Panc1 (cell line): ENCODE measurements at regions of chr15 and their contacts with region 1.

Region 1: GRCh38 chr15:89358755-89359439 is 24.3 kb upstream of the POLG start:
- DNase-seq: peak; percentile 65
- ATAC-seq: peak; percentile 88
- H3K4me3 ChIP-seq: peak overlapping the region; percentile 44 to 55; a peak in 3 of 4 replicates
- H3K27ac ChIP-seq: no peak overlapping the region
- H3K4me1 ChIP-seq: peaks cover 2% of the 10 kb centered on the region; the same call in 1 of the 2 replicates
- H3K27me3 ChIP-seq: peaks cover 28% of the 10 kb centered on the region
- CTCF ChIP-seq: peak; percentile 99

Region 2: GRCh38 chr15:89087830-89088604 is 270.9 kb before region 1 on chr15 and contains the start of gene ABHD2:
- CTCF ChIA-PET with region 1: no interaction called
- POLR2A ChIA-PET with region 1: interaction called, 17 read pairs
- in situ Hi-C with region 1: no loop called
- intact Hi-C with region 1: no loop called
- DNase-seq: peak; percentile 100
- ATAC-seq: peak; percentile 96
- H3K4me3 ChIP-seq: peak within 1 kb of the TSS; percentile 84
- H3K27ac ChIP-seq: peak within 1 kb of the TSS; percentile 97
- H3K4me1 ChIP-seq: peaks cover 40% of the 10 kb centered on the region
- H3K27me3 ChIP-seq: no peaks in the 10 kb centered on the region
- CTCF ChIP-seq: no peak
- total RNA-seq, gene ABHD2: 95.0 TPM

Region 3: DNA sequence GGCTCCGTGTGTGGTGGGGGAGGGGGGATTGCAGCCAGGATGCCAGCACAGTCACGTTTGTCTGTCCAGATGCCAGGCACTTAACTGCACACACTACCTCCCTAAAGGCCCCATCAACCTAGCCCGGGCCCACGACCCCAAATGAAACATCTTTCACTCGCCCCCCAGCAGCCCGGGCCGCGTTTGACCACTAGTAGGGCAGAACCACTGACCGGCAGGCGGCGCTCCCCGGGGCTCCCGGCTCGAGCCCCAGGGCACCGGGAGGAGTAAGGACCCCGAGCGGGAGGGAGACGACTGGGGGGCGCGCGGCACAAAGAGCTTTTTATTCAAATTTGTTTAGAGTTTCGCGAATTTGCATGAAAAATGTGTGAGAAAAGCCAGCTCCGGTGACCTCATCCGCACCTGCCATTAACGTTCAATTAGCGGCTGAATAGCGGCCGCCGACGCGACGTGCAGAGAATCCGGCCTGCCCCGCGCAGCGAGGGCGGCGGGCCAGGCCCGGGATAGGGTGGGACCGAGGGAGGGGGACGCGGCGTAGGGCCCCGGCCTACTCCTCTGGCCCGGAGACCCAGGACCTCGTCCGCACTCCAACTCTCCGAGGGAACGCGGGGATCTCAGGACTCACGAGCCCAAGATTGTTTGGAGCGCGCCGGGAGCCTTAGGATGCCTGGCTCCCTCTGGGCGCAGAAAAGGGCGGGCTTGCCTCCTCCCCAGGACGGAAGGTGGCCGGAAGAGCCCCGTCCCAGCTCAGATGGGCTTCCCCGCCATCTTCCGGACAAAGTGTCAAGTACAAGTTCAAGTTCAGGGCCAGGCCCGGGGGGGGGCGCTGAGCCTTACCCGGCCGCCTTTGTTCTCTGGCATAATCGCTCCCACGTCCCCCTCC is 40.6 kb after region 1 on chr15:
- CTCF ChIA-PET with region 1: interaction called, 10 read pairs
- POLR2A ChIA-PET with region 1: interaction called, 4 read pairs
- in situ Hi-C with region 1: no loop called
- intact Hi-C with region 1: no loop called
- DNase-seq: no peak
- ATAC-seq: peak; percentile 77
- H3K4me3 ChIP-seq: peak overlapping the region; percentile 46 to 50
- H3K27ac ChIP-seq: peak overlapping the region; percentile 29; the same call in 1 of the 2 replicates
- H3K4me1 ChIP-seq: peaks cover 3% of the 10 kb centered on the region; the same call in 1 of the 2 replicates
- H3K27me3 ChIP-seq: no peaks in the 10 kb centered on the region
- CTCF ChIP-seq: peak; percentile 81

Region 4: GRCh38 chr15:89436570-89437316 is 77.8 kb after region 1 on chr15:
- CTCF ChIA-PET with region 1: interaction called, 3 read pairs
- POLR2A ChIA-PET with region 1: no interaction called
- in situ Hi-C with region 1: loop called (anchors 5 kb)
- intact Hi-C with region 1: no loop called
- DNase-seq: no peak
- ATAC-seq: no peak
- H3K4me3 ChIP-seq: no peak overlapping the region
- H3K27ac ChIP-seq: no peak overlapping the region
- H3K4me1 ChIP-seq: no peaks in the 10 kb centered on the region
- H3K27me3 ChIP-seq: peaks cover 2% of the 10 kb centered on the region
- CTCF ChIP-seq: no peak

Region 5: DNA sequence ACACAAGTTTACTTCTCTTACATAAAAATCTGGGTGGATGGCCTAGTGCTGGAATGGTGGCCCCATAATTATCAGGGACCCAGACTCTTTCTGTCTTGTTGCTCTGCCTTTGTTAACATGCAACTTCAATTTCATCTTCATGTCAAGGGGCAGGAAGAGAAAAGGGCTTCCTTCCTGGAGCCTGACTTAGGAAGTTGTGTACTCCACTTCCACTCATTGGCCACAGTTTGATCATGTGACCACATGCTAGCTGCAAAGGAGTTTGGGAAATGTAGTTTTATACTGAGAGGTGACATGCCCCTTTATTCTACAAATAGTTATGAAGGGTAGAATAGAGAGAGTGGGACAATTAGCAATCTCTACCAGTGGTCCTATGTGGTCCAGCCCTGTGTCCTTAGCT is 98.2 kb after region 1 on chr15:
- CTCF ChIA-PET with region 1: interaction called, 10 read pairs
- POLR2A ChIA-PET with region 1: no interaction called
- in situ Hi-C with region 1: no loop called
- intact Hi-C with region 1: no loop called
- DNase-seq: no peak
- ATAC-seq: peak; percentile 64; the same call in 1 of the 2 replicates
- H3K4me3 ChIP-seq: no peak overlapping the region
- H3K27ac ChIP-seq: no peak overlapping the region
- H3K4me1 ChIP-seq: no peaks in the 10 kb centered on the region
- H3K27me3 ChIP-seq: no peaks in the 10 kb centered on the region
- CTCF ChIP-seq: no peak